Activated T-helper 2 cell treated with anti-CD3 and anti-CD28 coated beads, Interferon-gamma antibody, Interleukin-2, Interleukin-4, amounts not matched to agents 10 μg/mL and 5 μg/mL and 100 μg/mL, durations not matched to agents 14 hours and 24 hours and 36 hours (primary cell): ENCODE measurements at regions of chr18 and their contacts with region 1.

Region 1: GRCh38 chr18:13726232-13726971 is at the starts of genes FAM210A and RNMT:
- DNase-seq: peak; percentile 91
- H3K4me3 Mint-ChIP-seq: peak within 1 kb of the TSS; percentile 88
- H3K27ac Mint-ChIP-seq: peak within 1 kb of the TSS; percentile 79
- H3K4me1 Mint-ChIP-seq: peaks cover 49% of the 10 kb centered on the region
- H3K27me3 Mint-ChIP-seq: no peaks in the 10 kb centered on the region
- total RNA-seq, gene FAM210A: 30.3 and 33.8 TPM in 2 replicates
- total RNA-seq, gene RNMT: 54.0 and 54.3 TPM in 2 replicates

Region 2: DNA sequence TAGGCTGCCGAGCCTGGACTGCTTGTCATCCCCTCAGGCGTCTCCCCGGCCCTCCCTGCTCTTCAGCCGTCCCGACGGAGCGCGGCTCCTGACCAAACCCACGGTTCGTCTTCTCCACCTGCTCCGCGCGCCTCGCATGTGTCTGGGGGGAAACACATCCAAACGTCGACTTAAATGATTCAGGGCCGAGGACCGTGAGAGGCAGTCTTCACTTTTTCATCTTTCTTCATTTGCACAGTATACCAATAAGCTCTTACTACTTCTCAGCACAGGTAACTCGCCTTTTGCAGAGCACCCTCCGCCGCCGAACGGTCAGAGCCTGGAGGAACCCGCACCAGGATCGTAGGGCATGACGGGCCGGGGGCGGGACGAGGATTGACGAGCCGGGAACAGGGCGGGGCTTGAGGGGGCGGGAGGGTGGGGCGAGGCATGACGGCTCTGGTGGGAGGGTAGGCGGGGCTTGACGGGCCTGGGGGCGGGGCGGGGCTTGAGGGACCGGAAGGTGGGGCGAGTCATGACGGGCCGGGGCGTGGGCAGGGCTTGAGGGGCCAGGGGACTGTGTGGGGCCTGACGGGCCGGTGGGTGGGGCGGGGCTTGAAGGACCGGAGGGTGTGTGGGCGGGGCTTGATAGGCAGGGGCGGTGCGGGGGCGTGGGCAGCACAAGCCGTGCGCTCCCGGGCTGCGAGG is 778.9 kb before region 1 on chr18 and contains the start of gene SEH1L:
- intact Hi-C with region 1: loop called (anchors 5 kb)
- DNase-seq: peak; percentile 96
- H3K4me3 Mint-ChIP-seq: peak within 1 kb of the TSS; percentile 98
- H3K27ac Mint-ChIP-seq: peak within 1 kb of the TSS; percentile 99
- H3K4me1 Mint-ChIP-seq: peaks cover 29% of the 10 kb centered on the region
- H3K27me3 Mint-ChIP-seq: no peaks in the 10 kb centered on the region
- total RNA-seq, gene SEH1L: 112 and 115 TPM in 2 replicates

Region 3: GRCh38 chr18:13660510-13660909 is 65.9 kb before region 1 on chr18:
- intact Hi-C with region 1: loop called (anchors 5 kb)
- DNase-seq: no peak
- H3K4me3 Mint-ChIP-seq: no peak overlapping the region
- H3K27ac Mint-ChIP-seq: no peak overlapping the region
- H3K4me1 Mint-ChIP-seq: no peaks in the 10 kb centered on the region
- H3K27me3 Mint-ChIP-seq: no peaks in the 10 kb centered on the region

Region 4: GRCh38 chr18:13703899-13704298 is 22.5 kb before region 1 on chr18:
- intact Hi-C with region 1: no loop called
- DNase-seq: no peak
- H3K4me3 Mint-ChIP-seq: no peak overlapping the region
- H3K27ac Mint-ChIP-seq: no peak overlapping the region
- H3K4me1 Mint-ChIP-seq: no peaks in the 10 kb centered on the region
- H3K27me3 Mint-ChIP-seq: no peaks in the 10 kb centered on the region